ENCODE measurements at regions of chr19 and their contacts with region 1.

Region 1: GRCh38 chr19:44723952-44724319 is 24.6 kb upstream of the BCL3 start:
- DNase-seq: peak; percentile 89
- ATAC-seq: peak; percentile 86
- H3K4me3 Mint-ChIP-seq: no peak overlapping the region
- H3K27ac Mint-ChIP-seq: no peak overlapping the region
- H3K4me1 Mint-ChIP-seq: peaks cover 26% of the 10 kb centered on the region
- H3K27me3 Mint-ChIP-seq: peaks cover 4% of the 10 kb centered on the region
- CTCF ChIP-seq: peak; percentile 94

Region 2: GRCh38 chr19:44671400-44671799 is 52.5 kb before region 1 on chr19 and contains the start of gene CEACAM19:
- CTCF ChIA-PET with region 1: no interaction called
- POLR2A ChIA-PET with region 1: no interaction called
- DNase-seq: no peak
- ATAC-seq: no peak
- H3K4me3 Mint-ChIP-seq: no peak within 1 kb of the TSS
- H3K27ac Mint-ChIP-seq: no peak within 1 kb of the TSS
- H3K4me1 Mint-ChIP-seq: peaks cover 8% of the 10 kb centered on the region
- H3K27me3 Mint-ChIP-seq: peaks cover 21% of the 10 kb centered on the region
- CTCF ChIP-seq: no peak
- total RNA-seq, gene CEACAM19: 1.9 to 2.9 TPM (median 2.3 TPM) in 3 replicates

Region 3: DNA sequence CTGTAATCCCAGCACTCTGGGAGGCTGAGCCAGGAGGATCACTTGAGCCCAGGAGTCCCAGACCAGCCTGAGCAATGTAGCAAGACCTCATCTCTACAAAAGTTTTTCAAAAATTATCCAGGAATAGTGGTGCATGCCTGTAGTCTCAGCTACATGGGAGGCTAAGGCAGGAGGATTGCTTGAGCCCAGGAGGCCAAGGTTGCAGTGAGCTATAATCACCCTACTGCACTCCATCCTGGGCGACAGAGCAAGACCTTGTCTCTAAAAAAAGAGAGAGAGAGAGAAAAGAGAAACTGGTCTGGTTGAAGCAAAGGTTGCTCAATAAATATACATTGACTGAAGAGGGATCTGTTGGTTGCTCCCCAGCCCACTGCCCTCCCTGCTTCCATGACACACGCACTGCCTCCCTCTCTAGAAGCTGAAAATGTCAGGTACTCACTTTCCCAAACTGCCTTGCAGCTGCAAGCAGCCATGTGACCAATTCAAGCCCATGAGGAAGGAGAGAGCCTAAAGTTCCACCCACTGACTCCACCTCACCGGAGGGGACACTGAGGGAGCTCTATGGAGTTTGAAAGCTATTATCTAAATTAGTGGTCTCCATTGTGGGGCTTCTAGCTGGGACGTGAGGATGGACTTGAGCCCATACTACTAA is 10.9 kb before region 1 on chr19:
- CTCF ChIA-PET with region 1: interaction called, 19 read pairs
- POLR2A ChIA-PET with region 1: no interaction called
- DNase-seq: no peak
- ATAC-seq: peak; percentile 76
- H3K4me3 Mint-ChIP-seq: no peak overlapping the region
- H3K27ac Mint-ChIP-seq: peak overlapping the region; percentile 49; the same call in 1 of the 2 replicates
- H3K4me1 Mint-ChIP-seq: peaks cover 7% of the 10 kb centered on the region
- H3K27me3 Mint-ChIP-seq: no peaks in the 10 kb centered on the region
- CTCF ChIP-seq: no peak

Region 4: GRCh38 chr19:44741841-44742352 is 18.0 kb after region 1 on chr19:
- CTCF ChIA-PET with region 1: interaction called, 23 read pairs
- POLR2A ChIA-PET with region 1: interaction called, 3 read pairs
- DNase-seq: no peak
- ATAC-seq: peak; percentile 43
- H3K4me3 Mint-ChIP-seq: no peak overlapping the region
- H3K27ac Mint-ChIP-seq: no peak overlapping the region
- H3K4me1 Mint-ChIP-seq: peaks cover 19% of the 10 kb centered on the region
- H3K27me3 Mint-ChIP-seq: peaks cover 37% of the 10 kb centered on the region
- CTCF ChIP-seq: no peak

Region 5: DNA sequence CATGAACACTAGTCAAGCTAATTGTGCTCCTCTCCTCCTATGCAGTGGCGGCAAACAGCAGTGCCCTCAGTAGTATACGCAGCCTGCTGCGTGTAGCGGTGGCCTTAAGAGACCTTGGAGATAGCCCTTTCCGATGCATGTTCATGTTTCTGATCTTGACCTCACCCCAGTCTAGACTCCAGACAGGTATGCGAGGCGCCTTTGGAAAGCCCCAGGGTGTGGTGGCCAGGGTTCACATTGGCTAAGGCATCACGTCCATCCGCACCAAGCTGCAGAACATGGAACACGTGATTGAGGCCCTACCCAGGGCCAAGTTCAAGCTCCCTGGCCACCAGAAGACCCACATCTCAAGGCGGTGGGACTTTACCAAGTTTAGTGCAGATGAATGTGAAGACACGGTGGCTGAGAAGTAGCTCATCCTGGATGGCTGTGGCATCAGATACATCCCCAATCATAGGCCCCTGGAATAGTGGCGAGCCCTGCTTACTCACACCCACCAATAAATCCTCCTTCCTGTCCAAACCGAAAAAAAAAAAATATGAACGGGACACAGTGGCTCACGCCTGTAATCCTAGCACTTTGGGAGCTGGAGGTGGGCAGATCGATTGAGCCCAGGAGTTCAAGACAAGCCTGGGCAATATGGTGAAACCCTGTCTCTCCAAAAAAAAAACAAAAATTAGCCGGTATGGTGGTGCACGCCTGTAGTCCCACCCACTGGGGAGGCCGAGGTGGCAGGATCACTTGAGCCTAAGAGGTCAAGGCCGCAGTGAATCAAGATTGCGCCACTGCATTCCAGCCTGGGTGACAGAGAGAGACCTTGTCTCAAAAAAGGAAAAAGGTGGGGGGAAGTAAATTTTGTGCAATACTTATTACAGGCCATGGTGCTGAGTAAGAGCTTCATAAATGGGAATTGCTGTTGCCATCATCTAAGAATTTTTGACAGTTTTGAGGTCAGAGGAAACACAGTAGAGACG is 41.3 kb after region 1 on chr19:
- CTCF ChIA-PET with region 1: interaction called, 548 read pairs
- POLR2A ChIA-PET with region 1: interaction called, 11 read pairs
- DNase-seq: no peak
- ATAC-seq: no peak
- H3K4me3 Mint-ChIP-seq: no peak overlapping the region
- H3K27ac Mint-ChIP-seq: no peak overlapping the region
- H3K4me1 Mint-ChIP-seq: no peaks in the 10 kb centered on the region
- H3K27me3 Mint-ChIP-seq: peaks cover 39% of the 10 kb centered on the region
- CTCF ChIP-seq: no peak

Region 6: GRCh38 chr19:44785246-44785645 is 61.3 kb after region 1 on chr19:
- CTCF ChIA-PET with region 1: interaction called, 28 read pairs
- POLR2A ChIA-PET with region 1: interaction called, 6 read pairs
- DNase-seq: no peak
- ATAC-seq: no peak
- H3K4me3 Mint-ChIP-seq: no peak overlapping the region
- H3K27ac Mint-ChIP-seq: no peak overlapping the region
- H3K4me1 Mint-ChIP-seq: peaks cover 5% of the 10 kb centered on the region; the same call in 1 of the 2 replicates
- H3K27me3 Mint-ChIP-seq: no peaks in the 10 kb centered on the region
- CTCF ChIP-seq: no peak

Region 7: GRCh38 chr19:44808463-44809371 is 84.8 kb after region 1 on chr19 and contains the start of gene BCAM:
- CTCF ChIA-PET with region 1: interaction called, 23 read pairs
- POLR2A ChIA-PET with region 1: interaction called, 5 read pairs
- DNase-seq: peak; percentile 70
- ATAC-seq: peak; percentile 30
- H3K4me3 Mint-ChIP-seq: peak within 1 kb of the TSS; percentile 75
- H3K27ac Mint-ChIP-seq: peak within 1 kb of the TSS; percentile 95
- H3K4me1 Mint-ChIP-seq: peaks cover 42% of the 10 kb centered on the region
- H3K27me3 Mint-ChIP-seq: peaks cover 78% of the 10 kb centered on the region
- CTCF ChIP-seq: no peak
- total RNA-seq, gene BCAM: 73.1 to 89.5 TPM (median 80.0 TPM) in 3 replicates